PC-9 (cell line): ENCODE measurements at regions of chr10 and their contacts with region 1.

Region 1: GRCh38 chr10:75019370-75019769 is 92.1 kb upstream of the SAMD8 start:
- DNase-seq: peak in 1 of 2 experiments; percentile 43
- H3K4me3 ChIP-seq: no peak overlapping the region
- H3K27ac ChIP-seq: no peak overlapping the region
- H3K4me1 ChIP-seq: no peaks in the 10 kb centered on the region
- H3K27me3 ChIP-seq: no peaks in the 10 kb centered on the region
- CTCF ChIP-seq: peak; percentile 64

Region 2: DNA sequence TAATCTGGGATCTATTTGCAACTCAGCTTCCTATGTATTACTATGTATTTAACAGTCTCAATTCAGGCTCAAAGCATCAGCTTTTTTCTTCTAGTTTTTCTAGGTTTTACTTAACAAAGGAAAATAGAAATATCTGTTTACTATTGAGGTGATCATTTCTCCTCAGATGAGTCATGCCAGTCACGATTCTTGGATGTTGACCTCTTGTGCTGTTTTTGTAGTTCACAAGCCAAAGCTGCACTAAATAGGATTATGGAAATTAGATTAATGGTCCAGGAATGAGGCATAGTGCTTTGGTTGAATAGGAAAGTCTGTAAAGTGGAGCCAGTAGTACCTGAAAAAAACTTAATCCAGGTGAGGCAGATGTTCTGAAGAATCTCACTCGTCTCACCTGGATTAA is 391.2 kb before region 1 on chr10:
- CTCF ChIA-PET with region 1: no interaction called
- POLR2A ChIA-PET with region 1: interaction called, 10 read pairs
- intact Hi-C with region 1: no loop called
- DNase-seq: no peak
- H3K4me3 ChIP-seq: no peak overlapping the region
- H3K27ac ChIP-seq: no peak overlapping the region
- H3K4me1 ChIP-seq: no peaks in the 10 kb centered on the region
- H3K27me3 ChIP-seq: no peaks in the 10 kb centered on the region
- CTCF ChIP-seq: no peak

Region 3: DNA sequence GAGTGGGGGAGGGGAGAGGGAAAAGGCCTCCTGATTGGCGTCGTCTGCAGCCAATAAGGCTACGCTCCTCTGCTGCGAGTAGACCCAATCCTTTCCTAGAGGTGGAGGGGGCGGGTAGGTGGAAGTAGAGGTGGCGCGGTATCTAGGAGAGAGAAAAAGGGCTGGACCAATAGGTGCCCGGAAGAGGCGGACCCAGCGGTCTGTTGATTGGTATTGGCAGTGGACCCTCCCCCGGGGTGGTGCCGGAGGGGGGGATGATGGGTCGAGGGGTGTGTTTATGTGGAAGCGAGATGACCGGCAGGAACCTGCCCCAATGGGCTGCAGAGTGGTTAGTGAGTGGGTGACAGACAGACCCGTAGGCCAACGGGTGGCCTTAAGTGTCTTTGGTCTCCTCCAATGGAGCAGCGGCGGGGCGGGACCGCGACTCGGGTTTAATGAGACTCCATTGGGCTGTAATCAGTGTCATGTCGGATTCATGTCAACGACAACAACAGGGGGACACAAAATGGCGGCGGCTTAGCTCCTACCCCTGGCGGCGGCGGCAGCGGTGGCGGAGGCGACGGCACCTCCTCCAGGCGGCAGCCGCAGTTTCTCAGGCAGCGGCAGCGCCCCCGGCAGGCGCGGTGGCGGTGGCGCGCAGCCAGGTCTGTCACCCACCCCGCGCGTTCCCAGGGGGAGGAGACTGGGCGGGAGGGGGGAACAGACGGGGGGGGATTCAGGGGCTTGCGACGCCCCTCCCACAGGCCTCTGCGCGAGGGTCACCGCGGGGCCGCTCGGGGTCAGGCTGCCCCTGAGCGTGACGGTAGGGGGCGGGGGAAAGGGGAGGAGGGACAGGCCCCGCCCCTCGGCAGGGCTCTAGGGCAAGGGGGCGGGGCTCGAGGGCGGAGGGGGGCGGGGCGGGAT is 193.0 kb before region 1 on chr10 and contains the start of gene KAT6B:
- CTCF ChIA-PET with region 1: no interaction called
- POLR2A ChIA-PET with region 1: no interaction called
- intact Hi-C with region 1: loop called (anchors 5 kb)
- DNase-seq: peak; percentile 99 to 100
- H3K4me3 ChIP-seq: peak within 1 kb of the TSS; percentile 85
- H3K27ac ChIP-seq: peak within 1 kb of the TSS; percentile 91
- H3K4me1 ChIP-seq: peaks cover 19% of the 10 kb centered on the region
- H3K27me3 ChIP-seq: no peaks in the 10 kb centered on the region
- CTCF ChIP-seq: peak; percentile 38; the same call in 1 of the 2 replicates
- total RNA-seq, gene KAT6B: 26.3 and 30.9 TPM in 2 replicates

Region 4: GRCh38 chr10:74882831-74883230 is 136.5 kb before region 1 on chr10:
- CTCF ChIA-PET with region 1: no interaction called
- POLR2A ChIA-PET with region 1: no interaction called
- intact Hi-C with region 1: no loop called
- DNase-seq: no peak
- H3K4me3 ChIP-seq: no peak overlapping the region
- H3K27ac ChIP-seq: no peak overlapping the region
- H3K4me1 ChIP-seq: no peaks in the 10 kb centered on the region
- H3K27me3 ChIP-seq: no peaks in the 10 kb centered on the region
- CTCF ChIP-seq: no peak